Right ventricle myocardium inferior (tissue), 1 donor: ENCODE measurements at regions of chr9 and their contacts with region 1.

Region 1: DNA sequence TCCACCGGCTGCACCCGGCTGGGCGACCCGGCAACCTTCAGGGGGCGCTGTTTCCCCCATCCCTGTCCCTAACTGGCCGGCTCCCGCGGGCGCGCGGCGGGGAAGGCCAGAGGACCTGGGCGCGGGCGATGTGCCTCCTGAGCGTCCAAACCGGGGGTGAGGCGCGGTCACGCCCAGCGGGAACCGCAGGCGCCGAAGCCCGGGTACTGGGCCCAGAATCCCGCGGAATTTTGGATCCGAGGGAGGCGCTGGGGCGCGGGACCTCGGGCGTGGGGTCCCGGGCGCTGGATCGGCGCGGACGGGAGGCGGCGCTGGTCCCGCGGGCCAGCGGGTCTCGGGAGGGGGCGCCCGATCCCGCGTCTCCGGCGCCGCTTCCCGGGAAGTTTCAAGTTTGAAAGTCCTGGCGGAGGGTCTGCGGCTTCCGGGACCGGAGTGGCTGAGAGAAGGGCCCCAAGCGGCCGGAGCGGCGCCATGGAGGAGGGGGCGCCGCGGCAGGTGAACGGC is at the start of gene PKN3:
- DNase-seq: peak; percentile 93
- ATAC-seq: peak; percentile 92
- total RNA-seq, gene PKN3: 8.5 TPM

Region 2: DNA sequence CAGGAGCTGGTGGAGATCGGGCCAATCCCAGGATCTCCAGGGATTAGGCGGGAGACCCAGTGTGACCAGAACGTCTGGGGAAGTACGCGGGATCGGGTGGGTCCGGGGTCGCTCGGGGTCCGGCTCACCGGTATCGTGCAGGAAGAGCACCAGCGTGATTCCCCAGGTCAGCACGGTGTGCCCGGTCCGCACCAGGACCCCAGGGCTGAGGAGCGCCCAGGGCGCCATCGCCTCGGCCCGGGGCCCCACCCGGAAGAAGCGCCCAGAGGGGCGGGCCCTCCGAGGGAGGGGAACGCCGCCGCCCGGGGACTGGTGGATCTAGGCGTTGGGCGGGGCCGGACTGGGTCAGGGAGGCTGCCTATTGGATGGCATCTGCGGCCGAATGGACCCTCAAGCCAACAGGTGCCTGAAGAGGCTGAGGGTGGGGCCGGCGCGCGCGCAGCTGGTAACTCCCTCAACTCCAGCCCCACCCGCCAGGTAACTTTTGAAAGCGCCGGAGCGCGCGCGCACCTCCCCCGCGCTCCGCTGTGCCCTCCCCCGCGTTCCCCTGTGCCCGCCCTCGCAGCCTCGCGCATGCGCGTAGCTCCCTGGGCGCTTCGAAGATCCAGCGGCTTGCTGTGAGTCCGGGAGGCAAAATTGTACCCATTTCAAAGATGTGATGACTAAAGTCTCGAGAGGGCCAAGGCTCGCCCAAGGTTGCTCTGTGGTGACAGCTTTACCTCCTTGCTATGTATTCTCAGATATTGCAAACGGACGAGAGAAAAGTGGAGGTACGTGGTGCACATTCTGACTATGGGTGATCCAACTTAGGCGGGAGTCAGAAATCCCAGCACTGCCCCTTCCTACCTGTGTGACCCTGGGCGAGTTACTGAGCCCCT is 21.6 kb after region 1 on chr9 and contains the start of gene ZDHHC12:
- intact Hi-C with region 1: loop called (anchors 2 kb)
- DNase-seq: peak; percentile 99
- ATAC-seq: peak; percentile 93
- total RNA-seq, gene ZDHHC12: 6.4 TPM